CD4-positive, alpha-beta memory T cell (primary cell): ENCODE measurements at regions of chr6 and their contacts with region 1.

Region 1: GRCh38 chr6:3456755-3457466 is at the start of gene SLC22A23:
- DNase-seq: peak; percentile 74 to 79 (median 76)
- H3K4me3 ChIP-seq: peak within 1 kb of the TSS; percentile 55 to 63
- H3K4me3 Mint-ChIP-seq: peak within 1 kb of the TSS; percentile 81 to 92 (median 88)
- H3K27ac ChIP-seq: peak within 1 kb of the TSS; percentile 37
- H3K27ac Mint-ChIP-seq: peak within 1 kb of the TSS; percentile 62 to 89 (median 80)
- H3K4me1 ChIP-seq: peaks cover 35% of the 10 kb centered on the region
- H3K4me1 Mint-ChIP-seq: peaks cover 6 to 14% (median 9%) of the 10 kb centered on the region in 4 donors
- H3K27me3 ChIP-seq: peaks cover 6% of the 10 kb centered on the region
- H3K27me3 Mint-ChIP-seq: peaks cover 3 to 9% of the 10 kb centered on the region in 2 donors
- total RNA-seq, gene SLC22A23: 7.9 to 12.5 TPM

Region 2: DNA sequence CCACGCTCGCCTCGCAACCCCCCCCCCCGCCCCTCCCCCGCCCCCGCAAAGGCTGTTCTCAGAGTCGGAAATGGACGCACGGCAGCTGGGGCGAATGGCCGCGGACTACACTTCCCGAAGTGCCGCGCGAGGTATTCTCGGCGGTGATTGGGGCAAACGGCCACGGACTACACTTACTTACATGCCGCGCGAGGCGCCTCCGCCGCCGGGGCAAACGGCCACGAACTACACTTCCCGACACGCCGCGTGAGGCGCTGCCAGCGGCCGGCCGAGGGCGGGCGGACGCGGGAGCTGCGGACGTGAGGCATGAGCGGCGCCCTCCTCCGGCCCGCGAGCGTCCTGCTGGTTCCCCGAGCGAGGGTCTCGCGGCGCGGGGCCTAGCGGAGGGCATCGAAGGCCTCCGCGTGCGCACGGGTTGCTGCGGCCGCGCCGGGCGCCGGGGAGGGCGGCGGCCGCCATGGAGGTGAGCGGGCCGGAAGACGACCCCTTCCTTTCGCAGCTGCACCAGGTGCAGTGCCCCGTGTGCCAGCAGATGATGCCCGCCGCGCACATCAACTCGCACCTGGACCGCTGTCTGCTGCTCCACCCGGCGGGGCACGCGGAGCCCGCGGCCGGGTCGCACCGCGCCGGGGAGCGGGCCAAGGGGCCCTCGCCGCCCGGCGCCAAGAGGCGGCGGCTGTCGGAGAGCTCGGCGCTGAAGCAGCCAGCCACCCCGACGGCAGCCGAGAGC is 691.6 kb before region 1 on chr6 and contains the start of gene WRNIP1:
- CTCF ChIA-PET with region 1: no interaction called
- POLR2A ChIA-PET with region 1: no interaction called
- intact Hi-C with region 1: loop called (anchors 5 kb)
- DNase-seq: peak; percentile 95 to 98 (median 98)
- H3K4me3 ChIP-seq: peak within 1 kb of the TSS; percentile 63 to 79
- H3K4me3 Mint-ChIP-seq: peak within 1 kb of the TSS; percentile 93 to 97 (median 95)
- H3K27ac ChIP-seq: peak within 1 kb of the TSS; percentile 90
- H3K27ac Mint-ChIP-seq: peak within 1 kb of the TSS; percentile 98 to 100 (median 99)
- H3K4me1 ChIP-seq: peaks cover 45% of the 10 kb centered on the region
- H3K4me1 Mint-ChIP-seq: peaks cover 33 to 63% (median 43%) of the 10 kb centered on the region in 4 donors
- H3K27me3 ChIP-seq: no peaks in the 10 kb centered on the region
- H3K27me3 Mint-ChIP-seq: peaks cover 0 to 1% of the 10 kb centered on the region in 2 donors
- total RNA-seq, gene WRNIP1: 41.1 to 42.7 TPM

Region 3: GRCh38 chr6:3118353-3119039 is 338.4 kb before region 1 on chr6 and contains the start of gene BPHL:
- CTCF ChIA-PET with region 1: no interaction called
- POLR2A ChIA-PET with region 1: no interaction called
- intact Hi-C with region 1: loop called (anchors 1 kb)
- DNase-seq: peak; percentile 98 to 100 (median 99)
- H3K4me3 ChIP-seq: peak within 1 kb of the TSS; percentile 76 to 94
- H3K4me3 Mint-ChIP-seq: peak within 1 kb of the TSS; percentile 75 to 96 (median 91)
- H3K27ac ChIP-seq: peak within 1 kb of the TSS; percentile 87
- H3K27ac Mint-ChIP-seq: peak within 1 kb of the TSS; percentile 93 to 97 (median 96)
- H3K4me1 ChIP-seq: peaks cover 14% of the 10 kb centered on the region
- H3K4me1 Mint-ChIP-seq: peaks cover 7 to 20% (median 14%) of the 10 kb centered on the region in 4 donors
- H3K27me3 ChIP-seq: no peaks in the 10 kb centered on the region
- H3K27me3 Mint-ChIP-seq: no peaks in the 10 kb centered on the region
- total RNA-seq, gene BPHL: 11.9 to 13.7 TPM

Region 4: DNA sequence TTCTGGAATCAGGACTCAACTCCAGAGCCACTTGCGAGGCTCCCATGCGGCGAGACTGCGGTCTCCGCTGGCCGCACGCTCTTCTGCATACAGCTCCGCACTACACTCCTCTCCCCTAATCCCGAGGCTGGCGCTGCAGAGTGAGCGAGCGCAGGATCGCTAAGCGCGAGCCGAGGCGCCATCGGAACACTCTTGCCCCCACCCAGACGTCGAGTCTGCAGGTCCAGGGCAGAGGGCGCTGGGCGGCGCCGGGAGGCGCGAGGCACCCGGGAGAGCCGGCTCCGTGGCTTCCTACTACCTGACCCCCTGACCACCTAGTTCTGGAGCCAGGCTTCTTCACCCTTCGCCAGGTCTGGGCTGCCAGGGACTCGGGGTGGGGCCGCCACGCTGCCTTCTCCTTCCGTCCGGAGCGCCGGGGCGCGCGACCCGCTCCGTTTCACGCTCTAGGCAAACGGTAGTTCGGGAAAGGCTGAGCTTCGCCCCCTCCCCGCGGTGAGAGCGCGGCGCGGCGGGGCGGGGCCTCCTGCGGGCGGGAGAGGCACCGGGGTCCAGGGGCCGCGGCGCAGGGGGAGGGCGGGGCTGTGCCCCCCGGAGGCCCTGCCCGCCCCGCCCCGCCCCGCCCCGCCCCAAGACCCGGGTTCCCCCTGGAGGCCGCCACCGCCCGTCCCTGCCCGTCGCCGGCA is 294.2 kb before region 1 on chr6:
- CTCF ChIA-PET with region 1: no interaction called
- POLR2A ChIA-PET with region 1: no interaction called
- intact Hi-C with region 1: loop called (anchors 5 kb)
- DNase-seq: peak; percentile 48 to 72 (median 55)
- H3K4me3 ChIP-seq: peak overlapping the region; percentile 53 to 61
- H3K4me3 Mint-ChIP-seq: peak overlapping the region; percentile 84 to 91 (median 85)
- H3K27ac ChIP-seq: peak overlapping the region; percentile 58
- H3K27ac Mint-ChIP-seq: peak overlapping the region; percentile 81 to 97 (median 87)
- H3K4me1 ChIP-seq: peaks cover 35% of the 10 kb centered on the region
- H3K4me1 Mint-ChIP-seq: peaks cover 27 to 49% (median 33%) of the 10 kb centered on the region in 4 donors
- H3K27me3 ChIP-seq: no peaks in the 10 kb centered on the region
- H3K27me3 Mint-ChIP-seq: peaks cover 0 to under 1% of the 10 kb centered on the region in 2 donors

Region 5: DNA sequence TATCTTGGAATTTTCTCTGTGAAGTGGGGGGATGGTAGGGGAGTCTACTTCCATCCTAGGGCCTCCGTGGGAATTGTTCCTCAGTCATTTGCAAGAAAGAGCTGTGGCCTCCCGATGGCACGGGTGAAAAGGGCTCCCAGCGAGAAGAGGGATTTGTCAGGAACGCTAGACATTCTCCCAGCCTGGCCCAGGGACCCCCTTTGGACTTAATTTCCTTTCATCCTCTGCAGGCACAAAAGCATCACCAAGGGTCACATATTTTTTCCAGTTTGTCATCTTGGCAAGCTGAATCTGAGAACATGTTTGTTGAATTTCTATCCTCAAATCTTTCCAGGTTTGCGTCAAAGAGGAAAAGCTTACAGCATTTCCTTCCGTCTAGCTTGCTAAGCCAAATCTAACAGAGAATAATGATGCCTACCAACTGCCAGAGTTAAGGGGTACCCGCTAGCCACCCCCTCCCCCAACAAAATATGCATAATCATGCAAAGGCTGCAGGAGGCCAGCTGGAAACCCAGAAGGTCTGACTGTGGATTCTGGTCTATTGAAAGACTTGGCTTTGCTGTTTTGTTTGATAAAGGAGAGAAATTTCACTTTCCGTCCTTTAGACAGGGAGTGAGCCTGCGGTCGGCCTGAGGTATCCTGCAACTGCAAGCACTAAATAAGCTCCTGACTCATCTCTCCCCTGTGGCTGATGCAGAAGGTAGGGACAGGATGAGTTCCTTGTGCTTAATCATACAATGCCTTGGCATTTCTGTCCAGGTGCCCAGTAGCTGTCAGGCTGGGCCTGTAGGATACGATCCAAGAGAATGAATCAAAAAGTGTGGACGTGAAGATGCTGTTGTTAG is 175.1 kb before region 1 on chr6:
- CTCF ChIA-PET with region 1: interaction called, 7 read pairs
- POLR2A ChIA-PET with region 1: no interaction called
- intact Hi-C with region 1: loop called (anchors 1 kb)
- DNase-seq: no peak
- H3K4me3 ChIP-seq: no peak overlapping the region
- H3K4me3 Mint-ChIP-seq: no peak overlapping the region
- H3K27ac ChIP-seq: no peak overlapping the region
- H3K27ac Mint-ChIP-seq: peak overlapping the region in 2 of 7 donors; percentile 8 to 10
- H3K4me1 ChIP-seq: peaks cover 3% of the 10 kb centered on the region
- H3K4me1 Mint-ChIP-seq: peaks cover 4 to 8% (median 6%) of the 10 kb centered on the region in 4 donors
- H3K27me3 ChIP-seq: no peaks in the 10 kb centered on the region
- H3K27me3 Mint-ChIP-seq: no peaks in the 10 kb centered on the region

Region 6: DNA sequence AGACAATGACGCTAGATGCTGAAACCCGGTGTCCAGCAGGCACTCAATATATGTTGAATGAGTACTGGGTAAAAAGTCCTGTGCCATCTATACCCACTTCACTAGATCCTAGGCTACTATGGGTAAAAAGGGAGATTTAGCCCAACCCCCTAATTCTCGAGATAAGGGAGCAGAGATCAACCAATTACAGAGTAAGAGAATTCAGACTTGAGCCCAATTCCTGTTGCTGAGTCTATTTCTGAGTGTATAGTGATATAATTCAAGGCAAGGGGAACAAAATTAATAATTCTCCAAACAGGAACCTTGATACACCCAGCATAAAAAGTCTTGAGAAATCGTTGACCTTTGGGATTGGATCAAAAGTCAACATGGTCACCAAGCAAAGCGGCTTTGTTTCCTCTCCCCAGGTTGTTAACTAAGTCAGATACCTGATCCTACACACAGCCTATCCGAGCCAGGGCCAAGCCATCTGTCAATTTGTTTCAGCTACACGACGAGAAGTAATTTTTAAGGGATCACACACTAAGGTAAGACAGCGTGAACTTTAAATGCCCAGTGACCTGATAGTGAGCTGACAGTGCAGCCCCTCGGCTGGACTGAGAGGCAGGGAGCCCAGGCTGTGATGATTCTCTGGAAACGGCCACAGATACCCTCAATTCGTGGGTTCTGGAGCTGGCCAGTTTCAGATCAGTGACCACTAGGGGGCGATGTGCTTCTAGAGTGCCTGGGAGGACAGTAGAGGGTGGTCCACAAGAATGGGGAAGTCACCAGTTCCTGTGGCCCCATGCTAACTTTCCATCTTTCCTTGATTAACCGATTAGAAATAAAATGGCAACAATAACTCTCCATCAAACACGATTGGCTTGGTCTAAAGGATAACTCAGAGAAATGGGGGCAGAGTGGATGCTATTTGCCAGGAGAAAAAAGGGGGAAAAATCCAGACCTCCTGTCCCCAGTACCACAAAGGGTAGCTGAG is 46.2 kb before region 1 on chr6:
- CTCF ChIA-PET with region 1: interaction called, 6 read pairs
- POLR2A ChIA-PET with region 1: no interaction called
- intact Hi-C with region 1: loop called (anchors 2 kb)
- DNase-seq: peak; percentile 41 to 59 (median 54)
- H3K4me3 ChIP-seq: no peak overlapping the region
- H3K4me3 Mint-ChIP-seq: no peak overlapping the region
- H3K27ac ChIP-seq: no peak overlapping the region
- H3K27ac Mint-ChIP-seq: peak overlapping the region in 4 of 7 donors; percentile 47 to 81 (median 76)
- H3K4me1 ChIP-seq: peaks cover 11% of the 10 kb centered on the region
- H3K4me1 Mint-ChIP-seq: peaks cover 10 to 18% (median 16%) of the 10 kb centered on the region in 4 donors
- H3K27me3 ChIP-seq: no peaks in the 10 kb centered on the region
- H3K27me3 Mint-ChIP-seq: no peaks in the 10 kb centered on the region

Region 7: GRCh38 chr6:3630258-3630835 is 173.4 kb after region 1 on chr6:
- CTCF ChIA-PET with region 1: no interaction called
- POLR2A ChIA-PET with region 1: no interaction called
- intact Hi-C with region 1: no loop called
- DNase-seq: no peak
- H3K4me3 ChIP-seq: no peak overlapping the region
- H3K4me3 Mint-ChIP-seq: no peak overlapping the region
- H3K27ac ChIP-seq: no peak overlapping the region
- H3K27ac Mint-ChIP-seq: no peak overlapping the region
- H3K4me1 ChIP-seq: no peaks in the 10 kb centered on the region
- H3K4me1 Mint-ChIP-seq: peaks cover 0 to 4% (median 0%) of the 10 kb centered on the region in 4 donors
- H3K27me3 ChIP-seq: peaks cover 4% of the 10 kb centered on the region
- H3K27me3 Mint-ChIP-seq: peaks cover 10 to 25% of the 10 kb centered on the region in 2 donors

Region 8: GRCh38 chr6:3732345-3733141 is 275.6 kb after region 1 on chr6:
- CTCF ChIA-PET with region 1: interaction called, 3 read pairs
- POLR2A ChIA-PET with region 1: no interaction called
- intact Hi-C with region 1: loop called (anchors 5 kb)
- DNase-seq: peak; percentile 50 to 63 (median 58)
- H3K4me3 ChIP-seq: no peak overlapping the region
- H3K4me3 Mint-ChIP-seq: peak overlapping the region in 1 of 8 donors; percentile 22
- H3K27ac ChIP-seq: no peak overlapping the region
- H3K27ac Mint-ChIP-seq: peak overlapping the region in 1 of 7 donors; percentile 55
- H3K4me1 ChIP-seq: peaks cover 3% of the 10 kb centered on the region
- H3K4me1 Mint-ChIP-seq: peaks cover 0 to 4% (median 2%) of the 10 kb centered on the region in 4 donors
- H3K27me3 ChIP-seq: no peaks in the 10 kb centered on the region
- H3K27me3 Mint-ChIP-seq: peaks cover 3 to 5% of the 10 kb centered on the region in 2 donors